ENCODE measurements at regions of chr2 and their contacts with region 1.

Region 1: DNA sequence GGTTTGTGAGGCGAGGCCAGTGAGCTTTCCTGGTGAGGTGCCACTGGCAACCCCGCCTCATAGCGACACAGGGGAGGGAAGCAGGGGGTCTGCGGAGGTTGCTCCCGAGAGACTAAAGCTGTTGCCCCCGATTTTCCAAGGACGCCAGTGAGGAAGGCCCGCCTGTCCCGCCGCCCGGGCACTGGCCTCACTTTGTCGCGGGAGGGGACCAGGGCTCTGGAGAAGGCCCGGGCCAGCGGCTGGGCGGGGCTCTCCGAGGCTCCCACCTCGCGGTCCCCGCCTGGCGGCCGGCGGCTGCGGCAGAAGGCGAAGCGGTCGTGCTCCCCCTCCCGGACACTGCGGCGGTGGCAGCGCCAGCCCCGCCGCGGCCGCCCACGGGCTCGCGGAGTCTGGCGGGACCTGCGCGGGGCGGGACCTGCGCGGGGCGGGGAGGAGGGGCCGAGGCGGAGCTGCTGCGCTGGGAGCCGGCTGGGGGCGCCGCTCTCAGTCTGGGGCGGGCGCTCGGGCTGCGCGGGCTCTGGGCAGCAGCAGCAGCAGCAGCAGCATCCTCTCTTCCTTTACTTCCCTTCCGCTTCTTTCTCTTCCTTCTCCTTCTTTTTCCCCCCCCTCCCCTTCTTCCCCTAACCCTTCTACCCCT is at the start of gene MAP2:
- DNase-seq: peak; percentile 50 to 88
- H3K4me3 ChIP-seq: peak within 1 kb of the TSS; percentile 93
- H3K27ac ChIP-seq: peak within 1 kb of the TSS; percentile 83
- H3K4me1 ChIP-seq: peaks cover 19% of the 10 kb centered on the region
- H3K27me3 ChIP-seq: no peaks in the 10 kb centered on the region
- CTCF ChIP-seq: peak; percentile 36; the same call in 1 of the 2 replicates
- total RNA-seq, gene MAP2: 67.7 and 71.1 TPM in 2 replicates

Region 2: DNA sequence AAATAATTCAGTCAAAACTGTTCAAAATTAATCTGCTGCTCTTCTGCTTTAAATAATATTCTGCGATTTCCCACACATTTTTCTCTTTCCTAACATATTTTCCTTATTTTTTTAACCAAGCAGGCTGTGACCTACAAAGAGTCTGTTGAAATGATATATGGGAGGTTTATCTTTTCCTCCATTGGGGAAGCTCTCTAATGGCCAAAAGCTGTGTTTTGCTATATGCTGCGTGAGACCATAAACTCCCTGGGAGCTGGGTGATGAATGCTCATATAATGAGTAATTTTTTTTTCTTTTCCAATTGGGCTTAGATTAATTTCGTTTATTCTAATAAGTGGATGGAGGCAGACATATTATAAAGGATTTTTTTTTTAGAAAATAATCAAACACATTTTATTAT is 72.0 kb before region 1 on chr2:
- CTCF ChIA-PET with region 1: no interaction called
- POLR2A ChIA-PET with region 1: no interaction called
- intact Hi-C with region 1: no loop called
- DNase-seq: no peak
- H3K4me3 ChIP-seq: no peak overlapping the region
- H3K27ac ChIP-seq: no peak overlapping the region
- H3K4me1 ChIP-seq: no peaks in the 10 kb centered on the region
- H3K27me3 ChIP-seq: no peaks in the 10 kb centered on the region
- CTCF ChIP-seq: no peak

Region 3: DNA sequence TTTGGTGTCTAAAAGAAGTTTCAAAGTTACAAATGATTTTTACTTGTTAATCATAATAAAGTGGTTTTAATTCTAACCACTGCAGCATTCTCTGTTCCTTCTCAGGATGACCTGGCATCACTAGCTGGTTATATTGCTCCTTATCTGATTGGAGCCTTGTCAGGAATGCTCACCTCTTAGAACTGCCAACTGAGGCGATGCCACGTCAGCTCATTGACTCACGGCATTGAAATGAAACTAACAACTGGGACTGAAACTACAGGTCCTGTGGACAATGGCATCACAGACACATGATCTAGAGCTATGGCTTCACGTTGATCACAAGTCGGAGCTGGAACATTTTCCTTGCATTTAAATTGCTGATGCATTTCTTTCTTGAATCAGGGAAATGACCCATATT is 54.8 kb before region 1 on chr2:
- CTCF ChIA-PET with region 1: interaction called, 4 read pairs
- POLR2A ChIA-PET with region 1: no interaction called
- intact Hi-C with region 1: loop called (anchors 1 kb)
- DNase-seq: peak; percentile 78 to 97
- H3K4me3 ChIP-seq: 0 out of 2 replicates have a peak overlapping the region, but pooled peaks have one; percentile 6
- H3K27ac ChIP-seq: peak overlapping the region; percentile 99
- H3K4me1 ChIP-seq: peaks cover 19% of the 10 kb centered on the region
- H3K27me3 ChIP-seq: no peaks in the 10 kb centered on the region
- CTCF ChIP-seq: no peak

Region 4: GRCh38 chr2:209473930-209474419 is 50.3 kb after region 1 on chr2:
- CTCF ChIA-PET with region 1: interaction called, 3 read pairs
- POLR2A ChIA-PET with region 1: interaction called, 8 read pairs
- intact Hi-C with region 1: loop called (anchors 2 kb)
- DNase-seq: peak; percentile 49 to 70
- H3K4me3 ChIP-seq: no peak overlapping the region
- H3K27ac ChIP-seq: peak overlapping the region; percentile 81
- H3K4me1 ChIP-seq: peaks cover 24% of the 10 kb centered on the region
- H3K27me3 ChIP-seq: no peaks in the 10 kb centered on the region
- CTCF ChIP-seq: no peak

Region 5: GRCh38 chr2:209556354-209556961 is 132.8 kb after region 1 on chr2:
- CTCF ChIA-PET with region 1: no interaction called
- POLR2A ChIA-PET with region 1: no interaction called
- intact Hi-C with region 1: loop called (anchors 1 kb)
- DNase-seq: peak in 1 of 2 experiments; percentile 34
- H3K4me3 ChIP-seq: no peak overlapping the region
- H3K27ac ChIP-seq: no peak overlapping the region
- H3K4me1 ChIP-seq: no peaks in the 10 kb centered on the region
- H3K27me3 ChIP-seq: no peaks in the 10 kb centered on the region
- CTCF ChIP-seq: peak; percentile 52

Region 6: GRCh38 chr2:209640358-209640757 is 216.7 kb after region 1 on chr2:
- CTCF ChIA-PET with region 1: no interaction called
- POLR2A ChIA-PET with region 1: no interaction called
- intact Hi-C with region 1: loop called (anchors 2 kb)
- DNase-seq: peak in 1 of 2 experiments; percentile 81
- H3K4me3 ChIP-seq: no peak overlapping the region
- H3K27ac ChIP-seq: peak overlapping the region; percentile 37
- H3K4me1 ChIP-seq: peaks cover 40% of the 10 kb centered on the region
- H3K27me3 ChIP-seq: no peaks in the 10 kb centered on the region
- CTCF ChIP-seq: no peak

Region 7: GRCh38 chr2:210195101-210195852 is 771.6 kb after region 1 on chr2:
- CTCF ChIA-PET with region 1: no interaction called
- POLR2A ChIA-PET with region 1: no interaction called
- intact Hi-C with region 1: loop called (anchors 2 kb)
- DNase-seq: peak in 1 of 2 experiments; percentile 36
- H3K4me3 ChIP-seq: no peak overlapping the region
- H3K27ac ChIP-seq: no peak overlapping the region
- H3K4me1 ChIP-seq: no peaks in the 10 kb centered on the region
- H3K27me3 ChIP-seq: no peaks in the 10 kb centered on the region
- CTCF ChIP-seq: peak; percentile 68

Measured in PC-9 (cell line).